Endothelial cell of umbilical vein (primary cell): ENCODE measurements at regions of chr2 and their contacts with region 1.

Region 1: GRCh38 chr2:160994141-160995002 is 165.9 kb upstream of the TANK start:
- DNase-seq: peak; percentile 86
- H3K4me3 ChIP-seq: no peak overlapping the region
- H3K27ac ChIP-seq: no peak overlapping the region
- H3K4me1 ChIP-seq: peaks cover 2% of the 10 kb centered on the region
- H3K27me3 ChIP-seq: no peaks in the 10 kb centered on the region
- CTCF ChIP-seq: peak; percentile 58 to 70
- POLR2A ChIP-seq: no peak

Region 2: DNA sequence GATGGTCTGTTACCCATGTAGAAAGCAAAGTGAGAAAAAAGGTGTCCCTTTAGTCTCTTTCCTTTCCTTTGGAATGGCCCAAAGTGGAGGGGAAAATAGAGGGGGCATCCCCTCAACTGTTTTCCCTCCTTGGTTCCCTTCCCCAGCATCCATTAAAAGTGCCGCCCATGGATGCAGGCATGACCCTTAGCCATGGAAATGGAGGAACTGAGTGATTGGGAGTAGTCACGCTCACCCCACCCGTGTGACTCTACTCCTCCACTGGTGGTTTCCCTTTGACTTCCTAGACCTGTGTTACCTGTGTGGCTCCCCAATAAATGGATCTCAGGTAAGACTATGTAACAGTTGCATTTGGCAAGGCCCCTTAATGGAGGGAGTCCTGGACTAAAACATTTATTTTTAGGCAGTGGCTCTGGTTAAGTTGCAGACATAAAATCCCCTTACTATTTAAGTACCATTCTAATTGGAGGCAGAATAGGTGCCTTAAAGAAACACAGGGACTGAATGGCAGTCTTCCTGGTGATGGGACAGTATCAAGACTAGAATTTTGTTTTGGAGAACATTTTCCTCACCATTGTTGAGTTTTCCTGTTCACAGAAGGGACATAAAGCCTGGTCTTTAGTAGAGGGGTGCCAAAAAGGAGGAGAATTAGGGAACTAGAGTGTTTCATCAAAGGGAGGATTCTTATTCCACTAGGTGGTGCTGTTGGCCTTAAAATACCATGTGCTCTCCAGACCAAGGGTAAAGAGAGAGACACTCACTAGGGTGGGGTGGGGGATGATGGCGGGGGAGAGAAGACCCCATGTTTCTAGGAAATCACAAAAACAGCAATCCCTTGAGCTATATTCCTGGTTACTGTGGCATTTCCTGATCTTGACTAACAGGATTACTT is 906.3 kb before region 1 on chr2:
- CTCF ChIA-PET with region 1: interaction called, 8 read pairs
- POLR2A ChIA-PET with region 1: no interaction called
- dilution Hi-C with region 1: no loop called
- intact Hi-C with region 1: loop called (anchors 2 kb)
- DNase-seq: no peak
- H3K4me3 ChIP-seq: no peak overlapping the region
- H3K27ac ChIP-seq: no peak overlapping the region
- H3K4me1 ChIP-seq: no peaks in the 10 kb centered on the region
- H3K27me3 ChIP-seq: no peaks in the 10 kb centered on the region
- CTCF ChIP-seq: peak; percentile 4 to 21
- POLR2A ChIP-seq: no peak

Region 3: DNA sequence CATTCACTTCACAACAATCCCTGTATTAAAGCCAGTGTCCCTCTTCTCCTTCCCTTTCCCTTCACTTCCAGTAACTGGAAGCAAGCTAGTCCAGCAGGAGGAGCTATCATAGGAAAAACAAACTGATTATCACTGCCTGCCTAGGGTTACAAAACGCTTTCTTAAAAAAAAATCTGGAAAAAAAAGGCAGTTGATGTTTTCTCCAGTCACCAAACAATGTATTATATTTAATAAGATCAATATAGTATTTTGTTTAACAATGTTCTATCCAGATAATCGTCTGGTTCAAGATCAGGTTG is 715.5 kb before region 1 on chr2:
- CTCF ChIA-PET with region 1: interaction called, 19 read pairs
- POLR2A ChIA-PET with region 1: no interaction called
- dilution Hi-C with region 1: no loop called
- intact Hi-C with region 1: loop called (anchors 1 kb)
- DNase-seq: peak; percentile 58
- H3K4me3 ChIP-seq: no peak overlapping the region
- H3K27ac ChIP-seq: peak overlapping the region; percentile 80
- H3K4me1 ChIP-seq: peaks cover 44% of the 10 kb centered on the region
- H3K27me3 ChIP-seq: no peaks in the 10 kb centered on the region
- CTCF ChIP-seq: peak; percentile 29 to 50
- POLR2A ChIP-seq: peak; percentile 0

Region 4: DNA sequence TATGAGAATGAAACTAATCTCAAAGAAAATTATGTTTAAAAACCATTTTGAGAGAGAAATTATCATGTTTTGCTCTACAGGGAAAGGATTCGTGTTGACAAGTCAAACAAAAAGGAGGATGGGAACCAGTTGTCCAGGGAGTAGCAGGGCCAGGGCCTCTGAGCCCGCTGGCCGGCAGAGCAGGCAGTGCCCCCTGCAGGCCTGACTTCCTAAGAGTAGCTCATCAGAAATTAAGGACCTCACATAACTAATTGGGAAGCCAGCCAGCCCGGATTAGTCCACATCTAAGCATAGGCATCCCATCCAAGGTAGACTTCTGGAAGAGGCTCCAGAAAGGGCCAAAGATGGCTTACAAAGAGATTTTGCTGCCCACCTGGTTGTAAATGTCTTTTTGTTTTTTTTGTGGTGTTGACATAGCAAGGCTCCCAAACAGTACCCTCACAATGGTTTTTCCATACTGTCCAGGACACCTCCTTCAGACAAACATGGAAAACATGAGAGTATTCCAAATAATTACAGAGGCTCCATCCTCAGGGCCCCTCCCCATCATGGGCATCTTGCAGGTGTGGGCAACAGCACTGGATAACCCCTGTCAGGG is 75.4 kb before region 1 on chr2:
- CTCF ChIA-PET with region 1: interaction called, 7 read pairs
- POLR2A ChIA-PET with region 1: no interaction called
- dilution Hi-C with region 1: no loop called
- intact Hi-C with region 1: loop called (anchors 2 kb)
- DNase-seq: peak; percentile 68
- H3K4me3 ChIP-seq: no peak overlapping the region
- H3K27ac ChIP-seq: no peak overlapping the region
- H3K4me1 ChIP-seq: peaks cover 11% of the 10 kb centered on the region
- H3K27me3 ChIP-seq: no peaks in the 10 kb centered on the region
- CTCF ChIP-seq: peak; percentile 68 to 73
- POLR2A ChIP-seq: no peak

Region 5: GRCh38 chr2:161273038-161273760 is 278.8 kb after region 1 on chr2:
- CTCF ChIA-PET with region 1: interaction called, 4 read pairs
- POLR2A ChIA-PET with region 1: no interaction called
- dilution Hi-C with region 1: no loop called
- intact Hi-C with region 1: loop called (anchors 5 kb)
- DNase-seq: peak; percentile 72
- H3K4me3 ChIP-seq: no peak overlapping the region
- H3K27ac ChIP-seq: no peak overlapping the region
- H3K4me1 ChIP-seq: no peaks in the 10 kb centered on the region
- H3K27me3 ChIP-seq: no peaks in the 10 kb centered on the region
- CTCF ChIP-seq: peak; percentile 44 to 56
- POLR2A ChIP-seq: no peak